ENCODE measurements at regions of chr6 and their contacts with region 1.

Region 1: DNA sequence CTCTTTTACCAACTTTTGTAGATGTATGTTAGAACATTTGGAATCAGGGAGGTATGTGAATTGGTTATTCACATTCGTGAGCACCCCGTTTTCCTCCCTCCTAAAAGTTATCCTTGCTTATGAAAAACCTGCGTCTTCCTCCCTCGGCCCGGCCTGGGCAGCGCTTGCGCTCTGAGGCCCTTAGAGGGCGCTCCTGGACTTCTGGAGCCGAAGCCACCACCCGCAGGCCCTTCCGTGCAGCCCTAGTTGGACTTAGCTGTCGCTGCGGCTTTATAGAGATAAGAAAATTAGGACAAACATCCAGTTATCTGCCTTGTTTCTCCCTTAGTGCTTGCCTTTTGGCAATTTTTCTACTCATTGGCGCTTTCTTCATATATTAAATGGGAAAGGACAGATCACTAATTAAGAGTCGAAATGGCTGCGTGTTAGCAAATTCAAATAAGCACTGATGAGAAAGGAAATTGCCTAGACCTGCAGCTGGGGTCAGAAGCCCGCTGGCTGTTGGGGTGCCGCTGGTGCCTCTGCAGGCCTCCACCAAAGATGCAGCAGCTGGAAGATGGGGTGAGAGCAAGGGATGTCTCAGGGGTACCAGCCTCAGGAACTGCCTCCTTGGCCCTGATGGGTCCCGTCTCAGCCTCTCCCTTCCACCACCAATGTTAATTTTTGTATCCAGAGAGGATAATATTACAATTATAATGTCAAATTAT is 5.2 kb downstream of the FNDC1 start:
- DNase-seq: peak; percentile 37 to 67 (median 43)
- H3K4me3 ChIP-seq: no peak overlapping the region
- H3K4me3 Mint-ChIP-seq: peak overlapping the region in 3 of 7 donors; percentile 5 to 54 (median 47)
- H3K27ac ChIP-seq: no peak overlapping the region
- H3K27ac Mint-ChIP-seq: peak overlapping the region in 1 of 8 donors; percentile 21
- H3K4me1 ChIP-seq: peaks cover 6% of the 10 kb centered on the region
- H3K4me1 Mint-ChIP-seq: peaks cover 15 to 20% (median 18%) of the 10 kb centered on the region in 3 donors
- H3K27me3 ChIP-seq: peaks cover 32% of the 10 kb centered on the region
- H3K27me3 Mint-ChIP-seq: peaks cover 46 to 77% of the 10 kb centered on the region in 2 donors

Region 2: DNA sequence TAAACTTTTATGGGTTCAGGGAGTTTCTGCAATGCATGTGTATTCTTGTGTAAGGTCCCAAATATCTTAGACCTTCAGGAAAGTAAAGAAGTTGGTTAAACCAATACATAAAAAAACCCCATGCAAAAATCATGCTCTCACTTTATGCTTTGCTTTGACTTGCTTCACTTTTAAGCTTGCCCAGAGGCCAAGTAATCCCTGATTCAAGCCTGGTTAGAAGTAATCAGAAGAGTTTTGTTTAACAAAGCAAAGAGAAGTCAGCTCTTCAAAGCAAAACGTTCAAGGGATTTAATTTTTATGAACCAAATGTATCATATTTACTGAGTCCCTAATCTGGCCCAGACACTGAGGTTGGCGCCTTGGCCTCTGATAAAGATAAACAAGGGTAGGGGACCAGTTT is 31.9 kb before region 1 on chr6:
- CTCF ChIA-PET with region 1: no interaction called
- POLR2A ChIA-PET with region 1: no interaction called
- DNase-seq: no peak
- H3K4me3 ChIP-seq: no peak overlapping the region
- H3K4me3 Mint-ChIP-seq: no peak overlapping the region
- H3K27ac ChIP-seq: no peak overlapping the region
- H3K27ac Mint-ChIP-seq: no peak overlapping the region
- H3K4me1 ChIP-seq: no peaks in the 10 kb centered on the region
- H3K4me1 Mint-ChIP-seq: no peaks in the 10 kb centered on the region
- H3K27me3 ChIP-seq: no peaks in the 10 kb centered on the region
- H3K27me3 Mint-ChIP-seq: peaks cover 21 to 40% of the 10 kb centered on the region in 2 donors

Region 3: DNA sequence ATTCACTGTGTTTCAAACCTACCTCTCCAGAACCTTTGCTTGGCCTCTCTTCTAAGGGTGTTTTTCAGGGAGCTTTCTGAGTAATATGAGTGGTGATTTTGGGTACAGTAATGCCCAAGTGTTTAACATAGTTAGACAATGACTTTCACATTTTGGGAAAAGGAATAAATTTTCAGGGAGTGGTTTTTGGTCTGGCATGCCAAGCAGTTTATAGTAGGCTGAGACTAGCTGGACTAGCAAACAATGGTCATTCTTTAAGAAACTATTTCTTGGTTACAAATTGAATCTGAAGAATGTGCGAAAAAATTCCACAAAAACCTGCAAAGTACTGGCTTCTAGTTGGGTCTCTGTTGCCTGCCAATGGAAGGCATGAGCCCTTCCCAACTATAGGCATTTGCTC is 10.1 kb after region 1 on chr6:
- CTCF ChIA-PET with region 1: interaction called, 11 read pairs
- POLR2A ChIA-PET with region 1: no interaction called
- DNase-seq: no peak
- H3K4me3 ChIP-seq: no peak overlapping the region
- H3K4me3 Mint-ChIP-seq: no peak overlapping the region
- H3K27ac ChIP-seq: no peak overlapping the region
- H3K27ac Mint-ChIP-seq: no peak overlapping the region
- H3K4me1 ChIP-seq: no peaks in the 10 kb centered on the region
- H3K4me1 Mint-ChIP-seq: peaks cover 2 to 11% (median 7%) of the 10 kb centered on the region in 3 donors
- H3K27me3 ChIP-seq: no peaks in the 10 kb centered on the region
- H3K27me3 Mint-ChIP-seq: peaks cover 8 to 31% of the 10 kb centered on the region in 2 donors

Region 4: GRCh38 chr6:159654483-159655098 is 480.2 kb after region 1 on chr6:
- CTCF ChIA-PET with region 1: interaction called, 12 read pairs
- POLR2A ChIA-PET with region 1: no interaction called
- DNase-seq: peak in 2 of 5 donors; percentile 25 to 42
- H3K4me3 ChIP-seq: no peak overlapping the region
- H3K4me3 Mint-ChIP-seq: no peak overlapping the region
- H3K27ac ChIP-seq: no peak overlapping the region
- H3K27ac Mint-ChIP-seq: no peak overlapping the region
- H3K4me1 ChIP-seq: no peaks in the 10 kb centered on the region
- H3K4me1 Mint-ChIP-seq: no peaks in the 10 kb centered on the region
- H3K27me3 ChIP-seq: no peaks in the 10 kb centered on the region
- H3K27me3 Mint-ChIP-seq: no peaks in the 10 kb centered on the region

Region 5: DNA sequence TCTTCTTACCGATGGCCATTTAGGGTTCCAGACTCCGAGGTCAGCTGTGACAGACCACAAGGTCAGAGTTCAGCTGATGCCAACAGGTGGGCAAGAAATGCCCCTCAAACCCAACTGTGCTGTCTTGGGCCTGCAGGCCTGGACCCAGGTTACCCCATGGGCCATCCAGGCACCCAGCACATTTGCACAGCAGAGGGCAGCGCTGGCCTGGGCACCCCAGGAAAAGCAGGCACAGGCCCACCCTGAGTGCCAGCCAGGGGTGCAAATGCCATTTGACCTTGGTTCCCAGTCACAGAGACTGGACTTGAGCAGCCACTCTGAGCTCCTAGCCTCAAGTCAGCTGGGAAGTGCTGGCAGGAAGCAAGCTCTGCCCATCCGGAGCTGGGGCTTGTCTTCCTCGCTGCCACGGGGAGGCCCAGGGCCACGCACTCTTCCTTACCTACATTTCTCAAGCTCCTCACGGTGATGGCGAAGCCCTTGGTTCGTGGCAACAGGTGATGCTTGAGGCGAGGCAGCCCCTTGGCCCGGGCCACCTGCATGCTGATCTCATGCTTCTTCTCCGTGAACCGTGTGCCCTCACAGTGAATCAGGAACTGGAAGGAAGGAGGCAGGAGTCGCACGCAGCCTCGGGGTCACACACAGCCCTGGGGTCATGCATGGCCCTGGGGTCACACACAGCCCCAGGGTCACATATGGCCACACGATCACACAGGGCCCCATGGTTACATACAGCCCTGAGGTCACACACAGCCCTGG is 1978.7 kb after region 1 on chr6:
- CTCF ChIA-PET with region 1: no interaction called
- POLR2A ChIA-PET with region 1: no interaction called
- DNase-seq: no peak
- H3K4me3 ChIP-seq: no peak overlapping the region
- H3K4me3 Mint-ChIP-seq: no peak overlapping the region
- H3K27ac ChIP-seq: no peak overlapping the region
- H3K27ac Mint-ChIP-seq: peak overlapping the region in 1 of 8 donors; percentile 32
- H3K4me1 ChIP-seq: no peaks in the 10 kb centered on the region
- H3K4me1 Mint-ChIP-seq: no peaks in the 10 kb centered on the region
- H3K27me3 ChIP-seq: no peaks in the 10 kb centered on the region
- H3K27me3 Mint-ChIP-seq: peaks cover 0 to 2% of the 10 kb centered on the region in 2 donors